ENCODE measurements at regions of chr4 and their contacts with region 1.

Region 1: GRCh38 chr4:83644677-83645659 is 109.1 kb downstream of the GPAT3 start:
- DNase-seq: peak; percentile 41
- H3K4me3 ChIP-seq: no peak overlapping the region; a peak in 1 of 4 replicates
- H3K27ac ChIP-seq: no peak overlapping the region
- H3K4me1 ChIP-seq: peaks cover 0 to 6% of the 10 kb centered on the region in 2 experiments; a peak in 1 of 4 replicates
- H3K27me3 ChIP-seq: peaks cover 33% of the 10 kb centered on the region
- CTCF ChIP-seq: peak; percentile 94
- EP300 ChIP-seq: no peak
- RAD21 ChIP-seq: peak; percentile 81

Region 2: DNA sequence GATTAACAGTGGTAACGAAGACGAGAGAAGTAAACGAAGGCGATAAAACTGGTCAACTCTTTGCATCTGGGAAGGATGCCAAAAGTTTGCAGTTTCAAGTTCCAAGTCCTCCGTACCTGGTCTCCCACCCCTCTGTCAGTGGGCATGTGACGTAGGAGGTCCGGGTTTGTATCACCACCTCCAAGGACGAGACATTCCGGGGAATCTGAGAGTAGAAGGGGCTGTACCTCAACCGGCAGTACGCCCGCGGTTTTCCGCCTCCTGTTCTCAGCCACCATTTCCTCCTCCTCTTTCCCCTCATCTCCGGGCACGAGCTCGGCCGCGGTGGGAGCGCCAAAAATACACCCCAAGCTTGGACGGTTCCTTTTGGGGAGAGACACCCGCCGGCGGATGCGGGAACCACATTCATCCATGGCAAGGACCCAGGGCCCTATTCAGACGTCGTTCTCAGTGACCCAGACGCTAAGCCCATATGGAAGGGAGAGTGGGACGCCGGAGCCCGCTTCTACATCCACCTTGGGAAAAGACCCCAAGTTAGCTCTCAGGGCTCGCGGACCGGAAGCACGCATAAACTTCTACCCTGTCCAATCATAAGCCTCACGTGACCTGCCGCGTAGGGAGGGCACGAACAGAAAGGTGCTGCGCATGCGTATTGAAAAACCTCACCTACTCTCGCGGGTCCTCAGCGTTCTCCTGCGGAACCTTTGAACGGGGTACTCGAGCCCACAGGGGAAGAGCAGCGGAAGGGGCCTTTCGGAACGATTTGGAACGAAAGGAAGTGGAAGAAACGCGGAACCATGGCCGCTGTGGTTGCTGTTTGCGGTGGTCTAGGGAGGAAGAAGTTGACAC is 189.5 kb before region 1 on chr4 and contains the starts of genes HELQ and MRPS18C:
- CTCF ChIA-PET with region 1: no interaction called
- POLR2A ChIA-PET with region 1: no interaction called
- DNase-seq: peak; percentile 90
- H3K4me3 ChIP-seq: peak within 1 kb of the TSS; percentile 95 to 98
- H3K27ac ChIP-seq: peak within 1 kb of the TSS; percentile 93 to 96
- H3K4me1 ChIP-seq: peaks cover 0 to 11% of the 10 kb centered on the region in 2 experiments; a peak in 2 of 4 replicates
- H3K27me3 ChIP-seq: no peaks in the 10 kb centered on the region
- CTCF ChIP-seq: peak; percentile 39; the same call in 1 of the 2 replicates
- EP300 ChIP-seq: no peak
- RAD21 ChIP-seq: no peak
- polyA plus RNA-seq, gene HELQ: 7.2 and 8.1 TPM in 2 replicates
- polyA plus RNA-seq, gene MRPS18C: 19.7 and 22.2 TPM in 2 replicates

Region 3: GRCh38 chr4:83561381-83561780 is 83.6 kb before region 1 on chr4:
- CTCF ChIA-PET with region 1: no interaction called
- POLR2A ChIA-PET with region 1: no interaction called
- DNase-seq: no peak
- H3K4me3 ChIP-seq: no peak overlapping the region
- H3K27ac ChIP-seq: no peak overlapping the region
- H3K4me1 ChIP-seq: no peaks in the 10 kb centered on the region
- H3K27me3 ChIP-seq: peaks cover 5% of the 10 kb centered on the region; the same call in 1 of the 2 replicates
- CTCF ChIP-seq: no peak
- EP300 ChIP-seq: no peak
- RAD21 ChIP-seq: no peak

Region 4: GRCh38 chr4:83629945-83630721 is 14.8 kb before region 1 on chr4:
- CTCF ChIA-PET with region 1: interaction called, 15 read pairs
- POLR2A ChIA-PET with region 1: no interaction called
- DNase-seq: no peak
- H3K4me3 ChIP-seq: no peak overlapping the region
- H3K27ac ChIP-seq: no peak overlapping the region
- H3K4me1 ChIP-seq: no peaks in the 10 kb centered on the region
- H3K27me3 ChIP-seq: peaks cover 3% of the 10 kb centered on the region; the same call in 1 of the 2 replicates
- CTCF ChIP-seq: no peak
- EP300 ChIP-seq: no peak
- RAD21 ChIP-seq: no peak

Region 5: GRCh38 chr4:83658806-83659495 is 14.0 kb after region 1 on chr4:
- CTCF ChIA-PET with region 1: interaction called, 30 read pairs
- POLR2A ChIA-PET with region 1: no interaction called
- DNase-seq: no peak
- H3K4me3 ChIP-seq: no peak overlapping the region
- H3K27ac ChIP-seq: no peak overlapping the region
- H3K4me1 ChIP-seq: no peaks in the 10 kb centered on the region
- H3K27me3 ChIP-seq: peaks cover 8% of the 10 kb centered on the region; the same call in 1 of the 2 replicates
- CTCF ChIP-seq: no peak
- EP300 ChIP-seq: no peak
- RAD21 ChIP-seq: no peak

Region 6: DNA sequence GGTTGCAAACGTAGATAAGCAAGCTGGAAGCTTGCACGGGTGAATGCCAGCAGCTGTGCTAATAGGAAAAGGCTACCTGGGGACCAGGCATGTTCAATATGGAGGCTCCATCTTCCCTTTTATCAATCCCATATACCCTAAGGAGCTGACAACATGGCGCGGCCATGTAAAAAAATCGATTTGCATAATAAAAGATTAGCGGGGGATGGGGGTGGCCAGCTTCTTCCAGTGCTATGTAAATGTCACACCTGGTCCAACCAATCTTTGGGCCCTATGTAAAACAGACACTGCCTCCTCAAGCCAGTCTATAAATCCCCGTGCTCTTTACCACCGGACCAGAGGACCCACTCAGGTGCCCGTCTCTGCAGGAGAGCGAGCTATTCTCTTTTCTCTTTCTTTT is 19.1 kb after region 1 on chr4:
- CTCF ChIA-PET with region 1: interaction called, 10 read pairs
- POLR2A ChIA-PET with region 1: no interaction called
- DNase-seq: no peak
- H3K4me3 ChIP-seq: no peak overlapping the region
- H3K27ac ChIP-seq: no peak overlapping the region
- H3K4me1 ChIP-seq: no peaks in the 10 kb centered on the region
- H3K27me3 ChIP-seq: peaks cover 11% of the 10 kb centered on the region; the same call in 1 of the 2 replicates
- CTCF ChIP-seq: no peak
- EP300 ChIP-seq: no peak
- RAD21 ChIP-seq: no peak

Region 7: DNA sequence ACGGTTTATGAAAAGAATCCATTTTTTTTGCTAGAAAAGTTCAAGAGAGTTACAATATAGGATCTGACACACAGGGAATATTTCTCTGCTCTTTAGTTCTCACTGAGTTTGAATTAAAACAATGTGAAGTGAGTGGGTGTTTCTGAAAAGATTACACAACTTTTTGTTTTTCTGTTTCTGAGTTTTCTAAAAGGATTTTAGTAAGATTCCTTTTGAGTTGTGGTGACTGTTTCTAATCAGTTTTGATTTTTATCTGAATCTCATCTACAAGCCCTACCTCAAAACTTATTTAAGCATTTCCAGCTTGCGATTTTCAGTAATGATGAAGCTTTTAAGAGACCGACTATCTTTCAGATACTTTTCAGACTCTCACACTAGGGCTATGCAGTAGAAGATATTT is 32.7 kb after region 1 on chr4:
- CTCF ChIA-PET with region 1: interaction called, 14 read pairs
- POLR2A ChIA-PET with region 1: no interaction called
- DNase-seq: no peak
- H3K4me3 ChIP-seq: no peak overlapping the region
- H3K27ac ChIP-seq: no peak overlapping the region
- H3K4me1 ChIP-seq: no peaks in the 10 kb centered on the region
- H3K27me3 ChIP-seq: peaks cover 12% of the 10 kb centered on the region; the same call in 1 of the 2 replicates
- CTCF ChIP-seq: no peak
- EP300 ChIP-seq: no peak
- RAD21 ChIP-seq: no peak

Region 8: GRCh38 chr4:84503495-84504437 is 858.8 kb after region 1 on chr4:
- CTCF ChIA-PET with region 1: interaction called, 10 read pairs
- POLR2A ChIA-PET with region 1: no interaction called
- DNase-seq: peak; percentile 65
- H3K4me3 ChIP-seq: no peak overlapping the region; a peak in 1 of 4 replicates
- H3K27ac ChIP-seq: no peak overlapping the region
- H3K4me1 ChIP-seq: peaks cover 0 to 6% of the 10 kb centered on the region in 2 experiments; a peak in 1 of 4 replicates
- H3K27me3 ChIP-seq: peaks cover 64% of the 10 kb centered on the region
- CTCF ChIP-seq: peak; percentile 80
- EP300 ChIP-seq: no peak
- RAD21 ChIP-seq: peak; percentile 84

Measured in SK-N-SH (cell line).